Lower leg skin (tissue), 4 donors: ENCODE measurements at regions of chr7 and their contacts with region 1.

Region 1: DNA sequence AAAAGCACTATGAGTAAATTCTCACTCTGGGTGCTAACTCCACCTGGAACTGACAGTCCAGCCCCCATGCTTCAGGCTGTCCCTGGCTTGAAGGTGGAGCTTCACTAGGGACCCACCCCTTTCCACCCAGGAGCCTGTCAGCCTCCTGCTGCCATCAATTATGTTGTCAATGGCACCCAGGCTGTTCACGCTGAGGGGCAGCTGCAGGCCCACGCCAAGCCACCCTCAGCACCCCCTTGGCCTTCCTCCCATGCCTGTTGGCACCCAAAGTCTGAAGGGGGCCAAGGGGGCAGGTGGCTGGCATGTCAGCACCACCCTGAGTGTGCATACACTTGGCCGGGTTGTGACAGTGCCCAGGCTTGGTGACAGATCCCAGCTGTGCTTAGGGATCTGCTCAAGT is 149.3 kb downstream of the NXPH1 start:
- DNase-seq: peak in 1 of 2 donors; percentile 63
- H3K4me3 ChIP-seq: no peak overlapping the region
- CTCF ChIP-seq: no peak
- POLR2A ChIP-seq: no peak

Region 2: DNA sequence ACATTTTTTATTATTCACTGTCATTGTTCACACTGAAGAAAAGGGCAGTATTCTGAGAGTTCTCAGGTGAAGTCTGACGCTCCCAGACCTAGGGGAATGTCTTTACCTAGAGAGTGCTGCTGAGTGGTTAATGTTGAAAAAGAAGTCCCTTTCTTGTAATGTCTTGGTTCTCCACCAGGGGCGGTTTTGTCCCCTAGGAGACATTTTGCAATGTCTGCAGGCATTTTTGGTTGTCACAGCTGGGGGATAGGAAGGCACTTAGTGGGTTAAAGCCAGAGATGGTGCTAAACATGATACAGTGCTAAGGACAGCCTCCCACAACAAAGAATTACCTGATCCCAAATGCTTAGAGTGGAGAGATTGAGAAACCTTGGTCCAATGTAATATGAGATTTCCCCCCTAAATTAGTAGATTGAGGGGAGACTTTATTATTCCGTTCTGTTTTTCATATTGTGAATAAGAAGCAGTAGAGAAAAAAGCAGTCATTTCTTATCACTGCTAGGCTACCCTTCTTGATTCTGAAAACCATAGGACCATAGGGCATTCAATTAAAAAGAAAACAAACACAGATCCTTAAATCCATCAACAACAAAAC is 929.0 kb before region 1 on chr7:
- intact Hi-C with region 1: no loop called
- DNase-seq: no peak
- H3K4me3 ChIP-seq: no peak overlapping the region
- CTCF ChIP-seq: no peak
- POLR2A ChIP-seq: no peak

Region 3: DNA sequence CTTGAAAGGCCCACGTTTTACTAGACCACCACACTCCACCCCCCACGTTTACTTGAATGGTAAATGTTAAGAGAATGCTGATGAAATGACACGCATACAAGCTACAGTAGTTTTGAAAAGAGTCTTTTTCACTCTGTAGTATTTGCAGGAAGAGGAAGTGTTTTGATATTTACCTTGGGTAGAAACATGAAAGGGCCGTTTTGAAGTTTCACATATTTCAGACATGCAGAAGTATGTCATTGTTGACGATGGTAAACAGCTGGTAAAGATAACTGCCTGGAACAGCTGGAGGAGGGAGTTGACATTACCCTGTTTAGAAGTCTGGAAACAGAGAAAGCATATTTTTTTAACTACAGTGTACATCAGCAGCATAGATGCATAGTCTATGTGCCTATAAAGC is 11.4 kb after region 1 on chr7:
- intact Hi-C with region 1: no loop called
- DNase-seq: no peak
- H3K4me3 ChIP-seq: no peak overlapping the region
- CTCF ChIP-seq: no peak
- POLR2A ChIP-seq: no peak

Region 4: DNA sequence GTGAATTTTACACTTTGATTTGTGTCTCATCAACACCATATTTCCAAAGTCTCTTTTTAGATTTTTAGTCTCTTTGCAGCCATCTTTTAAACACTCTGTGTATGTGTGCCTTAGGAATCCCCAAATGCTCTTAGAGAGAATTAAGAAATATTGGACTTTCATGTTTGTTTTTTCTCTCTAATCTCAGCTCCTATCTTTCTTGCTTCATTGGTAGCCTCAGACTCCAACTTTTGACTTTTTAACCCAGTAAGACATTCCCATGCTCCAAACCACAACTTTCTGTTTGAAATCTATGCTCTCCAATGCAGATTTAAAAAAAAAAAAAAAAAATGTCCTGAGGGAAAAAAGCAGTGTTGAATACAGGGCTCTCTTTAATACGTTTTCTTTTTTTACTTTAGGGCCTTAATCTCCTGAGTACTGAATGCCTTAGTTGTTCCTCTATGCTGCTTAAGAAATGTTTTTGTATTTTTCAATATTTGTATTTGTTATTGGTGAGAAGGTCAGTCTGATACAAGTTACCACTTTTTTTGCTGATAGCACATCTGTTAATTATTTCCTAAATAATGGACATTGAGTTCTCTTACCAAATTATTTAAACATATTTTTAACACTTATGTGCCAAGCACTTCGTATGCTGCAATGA is 340.6 kb after region 1 on chr7:
- intact Hi-C with region 1: loop called (anchors 5 kb)
- DNase-seq: no peak
- H3K4me3 ChIP-seq: no peak overlapping the region
- CTCF ChIP-seq: no peak
- POLR2A ChIP-seq: no peak